OCI-LY7 (cell line): ENCODE measurements at regions of chr6 and their contacts with region 1.

Region 1: GRCh38 chr6:85354761-85355618 is 94.9 kb upstream of the NT5E start:
- DNase-seq: peak; percentile 61
- H3K4me3 ChIP-seq: no peak overlapping the region
- H3K27ac ChIP-seq: no peak overlapping the region
- H3K4me1 ChIP-seq: no peaks in the 10 kb centered on the region
- CTCF ChIP-seq: peak; percentile 95

Region 2: DNA sequence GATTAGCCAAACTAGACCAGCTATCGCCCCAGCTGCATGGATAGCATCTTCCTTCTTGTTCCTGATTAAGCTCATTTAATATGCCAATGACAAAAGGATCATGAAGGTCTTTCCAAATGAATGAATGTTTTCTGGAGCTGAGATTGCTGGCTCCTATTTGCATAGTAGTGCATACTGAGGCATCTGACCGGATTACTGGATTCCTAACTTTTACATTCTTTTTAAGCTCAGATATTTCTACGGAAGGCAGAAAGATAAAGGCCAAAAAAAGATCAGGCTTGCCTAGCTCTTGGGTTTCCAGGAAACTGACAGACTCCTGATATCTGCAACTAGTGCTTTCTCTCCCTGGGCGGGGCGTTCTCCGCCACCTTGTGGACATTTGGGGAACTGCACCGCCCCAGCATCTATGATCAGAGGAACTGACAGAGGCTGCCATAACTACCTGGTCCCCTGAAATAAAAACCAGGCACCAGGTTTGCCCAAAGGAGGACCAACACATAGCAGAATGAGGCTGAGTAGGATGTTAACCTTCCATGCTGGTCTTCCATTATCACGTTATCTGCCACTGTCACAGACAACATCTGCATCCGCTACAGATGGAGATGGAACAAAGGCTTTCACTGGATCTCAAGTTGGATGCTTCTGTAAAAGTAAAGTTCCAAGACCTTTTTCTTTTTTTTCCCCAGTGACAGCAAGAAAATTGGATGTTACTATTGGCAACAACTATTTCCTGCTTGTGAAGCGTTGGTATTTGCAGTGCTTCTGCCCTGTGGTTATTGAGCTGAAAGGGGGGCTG is 128.1 kb after region 1 on chr6:
- CTCF ChIA-PET with region 1: interaction called, 5 read pairs
- POLR2A ChIA-PET with region 1: interaction called, 4 read pairs
- intact Hi-C with region 1: loop called (anchors 1 kb)
- DNase-seq: peak; percentile 71
- H3K4me3 ChIP-seq: no peak overlapping the region
- H3K27ac ChIP-seq: no peak overlapping the region
- H3K4me1 ChIP-seq: no peaks in the 10 kb centered on the region
- CTCF ChIP-seq: peak; percentile 99

Region 3: GRCh38 chr6:85537055-85537494 is 182.1 kb after region 1 on chr6:
- CTCF ChIA-PET with region 1: no interaction called
- POLR2A ChIA-PET with region 1: interaction called, 3 read pairs
- intact Hi-C with region 1: loop called (anchors 2 kb)
- DNase-seq: peak; percentile 29
- H3K4me3 ChIP-seq: no peak overlapping the region
- H3K27ac ChIP-seq: no peak overlapping the region
- H3K4me1 ChIP-seq: no peaks in the 10 kb centered on the region
- CTCF ChIP-seq: peak; percentile 98

Region 4: DNA sequence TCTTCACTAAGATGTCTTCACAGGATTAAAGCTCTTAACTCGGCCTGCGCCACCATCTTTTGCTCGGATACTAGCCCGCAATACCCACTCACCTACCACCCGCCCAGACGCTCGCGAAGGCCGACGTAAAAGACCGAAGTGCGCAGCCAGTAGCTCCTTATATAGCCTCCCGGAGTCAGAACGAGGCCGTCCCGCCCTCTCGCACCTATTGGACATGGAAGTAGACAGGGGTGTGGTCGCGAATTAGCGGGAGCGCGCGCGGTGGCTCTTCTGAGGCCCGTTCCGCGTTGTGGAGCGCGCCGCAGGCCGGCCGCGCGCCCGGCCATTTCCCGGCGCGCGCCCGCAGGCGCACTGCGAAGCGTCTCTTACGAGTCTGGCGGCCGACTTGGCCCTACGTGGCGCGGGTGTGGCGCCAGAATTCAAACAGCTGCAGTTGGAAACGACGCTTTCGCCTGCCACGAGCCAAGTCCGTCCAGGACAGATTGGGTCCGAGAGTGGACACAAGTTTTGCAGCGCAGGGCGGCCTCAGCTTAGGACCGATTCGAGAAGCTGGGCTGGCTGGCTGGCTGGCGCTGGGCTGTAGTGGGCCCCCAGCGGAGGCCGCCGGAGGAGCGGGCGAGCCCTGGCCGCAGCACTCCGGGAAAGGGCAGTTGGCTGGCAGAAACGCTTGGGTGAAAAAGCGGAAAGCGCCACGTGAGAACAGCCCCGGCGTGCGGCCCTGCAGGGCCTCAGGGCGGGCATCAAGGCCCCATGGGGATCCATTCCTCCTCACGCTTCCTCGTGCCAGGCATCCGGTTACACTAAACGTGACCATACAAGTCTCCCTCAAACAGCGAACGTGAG is 323.8 kb after region 1 on chr6:
- CTCF ChIA-PET with region 1: no interaction called
- POLR2A ChIA-PET with region 1: no interaction called
- intact Hi-C with region 1: loop called (anchors 10 kb)
- DNase-seq: peak; percentile 99
- H3K4me3 ChIP-seq: peak overlapping the region; percentile 97
- H3K27ac ChIP-seq: peak overlapping the region; percentile 96
- H3K4me1 ChIP-seq: peaks cover 27% of the 10 kb centered on the region
- CTCF ChIP-seq: 0 out of 2 replicates have a peak, but pooled peaks have one; percentile 27